ENCODE measurements at regions of chr9 and their contacts with region 1.

Region 1: DNA sequence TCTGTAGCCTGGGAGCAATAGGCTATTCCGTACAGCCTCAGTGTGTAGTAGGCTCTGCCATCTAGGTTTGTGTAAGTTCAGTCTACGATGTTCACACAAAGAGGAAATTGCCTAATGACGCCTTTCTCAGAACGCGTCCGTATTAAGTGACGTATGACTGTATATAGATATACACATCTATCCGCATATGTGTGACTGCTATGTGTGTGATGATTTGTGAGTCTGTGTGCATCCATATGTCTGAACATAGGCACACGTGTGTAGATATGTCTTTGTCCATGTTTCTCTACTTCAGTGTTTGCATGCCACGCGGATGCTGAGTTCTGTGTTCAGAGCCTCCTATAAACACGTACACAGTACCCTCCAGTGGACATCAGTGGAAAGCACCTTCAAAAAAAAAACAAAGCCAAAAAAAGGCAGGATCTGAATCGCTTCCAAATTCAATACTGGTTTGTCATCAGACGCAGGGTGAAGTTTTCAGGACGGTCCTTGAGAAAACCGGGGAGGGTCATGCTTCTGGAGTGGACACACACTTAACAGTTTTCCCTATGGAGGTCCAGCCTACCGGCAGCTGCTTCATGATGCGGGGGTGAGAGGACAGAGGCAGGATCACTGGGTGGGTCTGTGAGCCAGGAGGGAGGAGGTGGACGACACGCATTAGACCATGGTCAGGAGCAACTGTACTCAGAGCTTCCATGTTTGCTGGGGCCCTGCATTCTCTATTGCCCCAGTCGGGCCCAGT is 29.5 kb upstream of the ALDH1B1 start:
- DNase-seq: peak; percentile 47 to 53
- H3K4me3 ChIP-seq: no peak overlapping the region
- H3K4me3 Mint-ChIP-seq: no peak overlapping the region
- H3K27ac Mint-ChIP-seq: no peak overlapping the region
- H3K4me1 ChIP-seq: no peaks in the 10 kb centered on the region
- H3K4me1 Mint-ChIP-seq: no peaks in the 10 kb centered on the region
- H3K27me3 ChIP-seq: no peaks in the 10 kb centered on the region
- H3K27me3 Mint-ChIP-seq: no peaks in the 10 kb centered on the region
- CTCF ChIP-seq: peak; percentile 49 to 61

Region 2: GRCh38 chr9:37746848-37747753 is 615.9 kb before region 1 on chr9:
- CTCF ChIA-PET with region 1: no interaction called
- POLR2A ChIA-PET with region 1: no interaction called
- intact Hi-C with region 1: loop called (anchors 5 kb)
- DNase-seq: peak; percentile 61 to 73
- H3K4me3 ChIP-seq: no peak overlapping the region
- H3K4me3 Mint-ChIP-seq: no peak overlapping the region
- H3K27ac Mint-ChIP-seq: no peak overlapping the region
- H3K4me1 ChIP-seq: no peaks in the 10 kb centered on the region
- H3K4me1 Mint-ChIP-seq: no peaks in the 10 kb centered on the region
- H3K27me3 ChIP-seq: no peaks in the 10 kb centered on the region
- H3K27me3 Mint-ChIP-seq: no peaks in the 10 kb centered on the region
- CTCF ChIP-seq: peak; percentile 85 to 90

Region 3: GRCh38 chr9:37913480-37914153 is 449.4 kb before region 1 on chr9:
- CTCF ChIA-PET with region 1: interaction called, 3 read pairs
- POLR2A ChIA-PET with region 1: no interaction called
- intact Hi-C with region 1: loop called (anchors 1 kb)
- DNase-seq: peak; percentile 86 to 93
- H3K4me3 ChIP-seq: no peak overlapping the region
- H3K4me3 Mint-ChIP-seq: no peak overlapping the region
- H3K27ac Mint-ChIP-seq: peak overlapping the region; percentile 57
- H3K4me1 ChIP-seq: peaks cover 10% of the 10 kb centered on the region
- H3K4me1 Mint-ChIP-seq: peaks cover 11% of the 10 kb centered on the region
- H3K27me3 ChIP-seq: no peaks in the 10 kb centered on the region
- H3K27me3 Mint-ChIP-seq: no peaks in the 10 kb centered on the region
- CTCF ChIP-seq: peak; percentile 88 to 93

Region 4: DNA sequence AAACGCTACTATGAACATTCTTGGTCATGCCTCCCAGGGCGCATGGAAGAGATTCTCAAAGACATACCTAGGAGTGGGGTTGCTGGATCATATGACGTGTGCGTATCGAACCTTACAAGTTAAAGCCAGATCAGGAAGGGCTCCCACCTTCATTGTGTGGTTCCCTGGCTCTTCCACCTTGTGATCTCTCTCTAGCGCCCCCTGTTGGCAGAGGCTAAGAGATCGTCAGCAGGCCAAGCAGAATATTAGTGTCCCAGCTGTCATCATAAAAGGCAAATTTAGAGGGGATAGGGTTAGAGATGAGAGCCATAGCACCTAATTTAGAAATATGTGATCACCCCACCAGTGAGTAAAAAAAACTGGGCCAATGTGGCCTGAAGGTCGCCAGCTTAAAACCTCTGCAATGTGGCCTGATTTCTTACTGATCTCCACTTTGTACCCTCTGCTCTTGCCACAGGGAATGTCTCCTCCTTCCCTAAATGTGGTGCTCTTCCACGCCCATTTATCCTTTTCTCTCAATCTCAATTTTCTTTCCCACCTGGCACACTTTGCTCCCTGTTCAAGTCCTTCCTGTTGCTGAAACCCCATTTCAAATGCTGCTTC is 202.3 kb before region 1 on chr9:
- CTCF ChIA-PET with region 1: no interaction called
- POLR2A ChIA-PET with region 1: no interaction called
- intact Hi-C with region 1: loop called (anchors 10 kb)
- DNase-seq: peak; percentile 64 to 75
- H3K4me3 ChIP-seq: no peak overlapping the region
- H3K4me3 Mint-ChIP-seq: no peak overlapping the region
- H3K27ac Mint-ChIP-seq: no peak overlapping the region
- H3K4me1 ChIP-seq: no peaks in the 10 kb centered on the region
- H3K4me1 Mint-ChIP-seq: no peaks in the 10 kb centered on the region
- H3K27me3 ChIP-seq: no peaks in the 10 kb centered on the region
- H3K27me3 Mint-ChIP-seq: no peaks in the 10 kb centered on the region
- CTCF ChIP-seq: peak; percentile 78 to 81

Region 5: GRCh38 chr9:38334234-38334633 is 28.8 kb before region 1 on chr9:
- CTCF ChIA-PET with region 1: no interaction called
- POLR2A ChIA-PET with region 1: no interaction called
- intact Hi-C with region 1: loop called (anchors 1 kb)
- DNase-seq: peak in 1 of 2 experiments; percentile 21
- H3K4me3 ChIP-seq: no peak overlapping the region
- H3K4me3 Mint-ChIP-seq: no peak overlapping the region
- H3K27ac Mint-ChIP-seq: no peak overlapping the region
- H3K4me1 ChIP-seq: no peaks in the 10 kb centered on the region
- H3K4me1 Mint-ChIP-seq: no peaks in the 10 kb centered on the region
- H3K27me3 ChIP-seq: no peaks in the 10 kb centered on the region
- H3K27me3 Mint-ChIP-seq: peaks cover 4% of the 10 kb centered on the region
- CTCF ChIP-seq: peak; percentile 43 to 53

Region 6: DNA sequence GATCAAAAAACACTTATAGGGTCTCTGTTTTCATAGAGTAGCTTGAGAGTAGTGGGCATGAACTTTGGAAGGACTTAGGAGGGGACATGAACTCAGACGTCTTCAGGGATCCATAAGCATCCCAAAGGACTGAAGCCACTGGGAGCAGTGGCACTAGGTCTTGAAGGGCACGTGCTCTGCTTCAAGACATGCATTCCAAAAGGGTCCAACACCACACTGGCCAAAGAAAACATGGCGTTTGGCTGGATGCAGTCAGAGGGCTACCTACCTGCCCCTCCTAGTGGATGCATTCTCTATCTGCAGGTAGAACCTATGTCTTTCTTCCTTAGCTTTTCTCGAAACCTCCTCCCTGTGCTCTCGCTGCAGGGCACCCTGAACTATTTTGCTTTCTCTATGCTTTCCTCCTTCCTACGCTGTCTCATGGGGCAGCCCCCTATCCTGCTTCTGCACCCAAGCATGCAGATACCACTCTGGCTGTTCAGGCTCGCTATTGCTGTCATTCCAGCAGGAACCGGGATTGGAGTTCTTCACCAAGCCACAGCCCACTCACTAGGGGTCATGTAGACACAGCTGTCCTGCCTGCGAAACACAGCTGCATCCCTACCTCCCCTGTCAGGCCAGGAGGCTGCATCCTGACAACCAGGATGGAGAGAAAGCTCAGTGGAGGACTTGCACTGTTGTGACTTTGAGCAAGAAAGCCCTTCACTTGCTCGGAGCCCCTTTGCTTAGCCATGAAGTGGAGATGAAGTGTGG is 345.0 kb after region 1 on chr9:
- CTCF ChIA-PET with region 1: no interaction called
- POLR2A ChIA-PET with region 1: no interaction called
- intact Hi-C with region 1: no loop called
- DNase-seq: peak in 1 of 2 experiments; percentile 27
- H3K4me3 ChIP-seq: no peak overlapping the region
- H3K4me3 Mint-ChIP-seq: no peak overlapping the region
- H3K27ac Mint-ChIP-seq: no peak overlapping the region
- H3K4me1 ChIP-seq: no peaks in the 10 kb centered on the region
- H3K4me1 Mint-ChIP-seq: no peaks in the 10 kb centered on the region
- H3K27me3 ChIP-seq: 0 out of 2 replicates have a peak, but pooled peaks cover 1% of the 10 kb centered on the region
- H3K27me3 Mint-ChIP-seq: peaks cover 9% of the 10 kb centered on the region
- CTCF ChIP-seq: peak; percentile 46 to 48

Measured in Caco-2 (cell line).